AG04450 (cell line): ENCODE measurements at regions of chr14 and their contacts with region 1.

Region 1: DNA sequence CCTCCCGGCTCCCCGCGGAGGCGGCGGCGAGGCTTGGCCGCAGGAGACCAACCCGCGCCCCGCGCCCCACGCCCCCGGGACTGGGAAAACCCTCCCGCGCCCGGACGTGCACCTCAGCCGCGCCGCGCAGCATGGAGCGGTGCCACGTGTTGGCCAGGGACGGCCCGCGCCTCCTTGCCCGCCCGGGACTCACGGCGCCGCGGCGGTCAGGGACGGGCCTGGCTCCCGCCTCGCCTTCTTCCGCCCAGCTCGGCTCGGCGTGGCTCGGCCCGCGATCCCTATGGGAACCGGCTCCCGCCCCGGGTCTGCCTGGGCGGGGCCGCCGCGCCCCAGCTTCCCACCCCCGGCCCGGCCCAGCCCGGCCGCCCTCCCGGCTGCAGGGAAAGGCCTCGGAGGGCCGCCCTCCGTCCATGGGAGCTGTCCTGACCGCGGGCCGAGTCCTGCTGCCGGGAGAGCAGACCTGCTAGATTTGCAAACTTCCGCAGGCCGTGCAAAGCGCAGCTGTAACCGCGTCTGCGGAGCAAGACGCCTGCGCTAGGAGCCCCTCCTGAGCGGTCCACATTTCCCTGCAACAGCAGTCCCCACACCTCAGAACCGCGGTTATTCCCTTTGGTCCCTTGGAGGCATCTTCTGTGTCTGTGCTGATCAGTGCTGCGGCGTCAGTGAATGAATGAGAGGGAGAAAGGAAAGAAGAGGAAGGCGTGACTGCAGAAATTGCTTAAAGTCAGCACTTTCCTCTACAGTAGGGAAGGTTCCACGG is at the start of gene CDKL1:
- DNase-seq: peak; percentile 7
- H3K4me3 ChIP-seq: peak within 1 kb of the TSS; percentile 61
- H3K27ac ChIP-seq: peak within 1 kb of the TSS; percentile 57
- H3K27me3 ChIP-seq: no peaks in the 10 kb centered on the region
- CTCF ChIP-seq: no peak
- polyA plus RNA-seq, gene CDKL1: 8.2 and 20.1 TPM in 2 replicates

Region 2: GRCh38 chr14:50371546-50371945 is 25.3 kb before region 1 on chr14:
- CTCF ChIA-PET with region 1: no interaction called
- POLR2A ChIA-PET with region 1: no interaction called
- DNase-seq: no peak
- H3K4me3 ChIP-seq: no peak overlapping the region
- H3K27ac ChIP-seq: no peak overlapping the region
- H3K27me3 ChIP-seq: no peaks in the 10 kb centered on the region
- CTCF ChIP-seq: no peak

Region 3: DNA sequence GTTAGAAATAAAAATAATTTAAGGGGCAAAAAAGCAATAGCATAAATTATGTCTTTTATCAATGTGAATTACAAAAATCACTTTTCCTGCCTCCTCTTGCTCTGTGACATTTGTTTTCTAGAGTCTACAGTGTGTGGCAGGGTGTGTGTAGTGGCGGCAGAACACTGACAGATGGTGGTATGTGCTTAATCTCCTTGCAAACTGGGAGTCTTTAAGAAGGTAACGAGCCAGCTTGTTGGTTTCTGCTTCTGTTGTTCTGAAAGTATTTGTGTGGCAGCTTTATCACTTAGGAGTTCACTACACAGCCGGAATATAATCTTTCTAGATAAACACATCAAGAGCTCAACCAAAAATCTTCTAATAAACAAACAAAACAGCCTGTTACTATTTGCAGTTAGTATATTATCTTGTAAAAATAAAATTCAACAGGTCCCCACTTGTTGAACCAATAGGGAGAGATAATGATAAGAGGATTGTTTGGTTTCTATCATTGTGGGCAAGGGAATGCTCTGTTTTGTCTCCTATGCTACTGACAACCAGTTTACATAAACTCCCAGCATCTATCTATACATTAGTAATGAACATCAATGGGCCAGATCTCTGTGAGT is 13.1 kb before region 1 on chr14:
- CTCF ChIA-PET with region 1: no interaction called
- POLR2A ChIA-PET with region 1: no interaction called
- DNase-seq: no peak
- H3K4me3 ChIP-seq: no peak overlapping the region
- H3K27ac ChIP-seq: no peak overlapping the region
- H3K27me3 ChIP-seq: no peaks in the 10 kb centered on the region
- CTCF ChIP-seq: no peak

Region 4: DNA sequence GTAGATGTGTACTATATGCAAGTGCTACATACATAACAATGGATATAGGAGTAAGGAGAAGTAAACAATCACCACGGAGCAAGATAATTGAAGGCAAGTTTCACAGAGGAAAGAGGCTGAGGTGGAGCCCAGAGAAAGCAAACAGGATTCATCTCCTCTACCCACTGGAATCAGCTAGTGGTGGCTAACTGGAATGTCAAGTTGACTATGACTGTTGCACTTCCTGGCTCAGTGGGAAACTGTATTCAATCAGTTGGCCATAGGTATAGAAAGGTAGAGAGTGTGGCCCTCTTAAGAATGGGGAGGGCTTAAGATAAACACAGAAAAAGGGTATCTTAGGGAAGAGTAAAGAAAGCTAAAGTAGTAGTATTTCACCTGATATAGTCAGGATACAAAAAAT is 73.2 kb after region 1 on chr14:
- CTCF ChIA-PET with region 1: no interaction called
- POLR2A ChIA-PET with region 1: interaction called, 10 read pairs
- DNase-seq: no peak
- H3K4me3 ChIP-seq: no peak overlapping the region
- H3K27ac ChIP-seq: no peak overlapping the region
- H3K27me3 ChIP-seq: no peaks in the 10 kb centered on the region
- CTCF ChIP-seq: no peak